Vagina (tissue), 2 donors: ENCODE measurements at regions of chr17 and their contacts with region 1.

Region 1: DNA sequence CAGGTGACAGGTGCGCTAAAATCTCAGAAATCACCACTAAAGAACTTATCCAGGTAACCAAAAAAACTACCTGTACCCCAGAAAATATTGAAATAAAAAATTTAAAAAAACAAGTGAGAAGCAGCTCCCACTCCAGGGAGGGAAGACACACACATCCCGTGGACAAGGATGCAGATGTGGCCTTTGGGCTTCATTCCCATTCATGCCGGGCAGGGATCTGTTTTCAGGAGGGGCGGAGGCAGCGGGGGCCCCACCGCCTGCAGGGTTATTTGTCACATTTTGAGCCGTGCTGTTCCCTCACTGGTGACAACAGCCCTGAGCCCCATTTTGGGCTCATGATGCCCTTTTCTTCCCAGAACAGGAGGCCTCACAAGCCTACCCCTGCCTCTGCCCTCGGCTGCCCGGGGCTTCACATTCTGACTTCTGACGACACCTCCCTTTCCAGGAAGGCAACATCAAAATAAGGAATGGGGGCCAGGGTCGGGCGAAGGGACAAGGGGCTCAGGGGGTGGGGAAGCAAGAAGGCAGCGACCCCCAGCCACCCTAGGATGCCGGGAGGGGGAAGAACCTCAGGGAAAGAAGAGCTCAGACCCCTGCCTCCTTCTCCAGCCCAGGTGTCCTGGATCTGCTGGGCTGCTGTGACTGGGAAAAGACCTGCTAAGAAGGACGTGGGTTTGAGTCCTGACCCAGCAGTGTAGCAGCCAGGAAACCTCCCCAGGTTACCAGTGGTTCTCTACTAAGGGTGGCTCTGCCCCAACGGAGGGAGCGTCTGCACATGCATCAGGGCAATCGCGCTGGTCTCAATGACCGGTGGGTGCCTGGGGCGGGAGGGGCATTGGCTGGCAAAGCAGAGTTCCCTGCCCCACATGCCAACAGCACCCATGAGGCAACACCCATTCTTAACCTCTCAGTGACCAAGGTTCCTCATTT is 2.3 kb upstream of the CD79B start:
- DNase-seq: no peak
- H3K4me3 ChIP-seq: no peak overlapping the region
- H3K27ac ChIP-seq: no peak overlapping the region
- H3K4me1 ChIP-seq: peaks cover 22% of the 10 kb centered on the region
- H3K27me3 ChIP-seq: no peaks in the 10 kb centered on the region
- CTCF ChIP-seq: no peak
- POLR2A ChIP-seq: no peak

Region 2: GRCh38 chr17:62898220-62898864 is 1036.1 kb before region 1 on chr17:
- intact Hi-C with region 1: loop called (anchors 5 kb)
- DNase-seq: no peak
- H3K4me3 ChIP-seq: no peak overlapping the region
- H3K27ac ChIP-seq: no peak overlapping the region
- H3K4me1 ChIP-seq: peaks cover 5% of the 10 kb centered on the region
- H3K27me3 ChIP-seq: no peaks in the 10 kb centered on the region
- CTCF ChIP-seq: no peak
- POLR2A ChIP-seq: no peak

Region 3: DNA sequence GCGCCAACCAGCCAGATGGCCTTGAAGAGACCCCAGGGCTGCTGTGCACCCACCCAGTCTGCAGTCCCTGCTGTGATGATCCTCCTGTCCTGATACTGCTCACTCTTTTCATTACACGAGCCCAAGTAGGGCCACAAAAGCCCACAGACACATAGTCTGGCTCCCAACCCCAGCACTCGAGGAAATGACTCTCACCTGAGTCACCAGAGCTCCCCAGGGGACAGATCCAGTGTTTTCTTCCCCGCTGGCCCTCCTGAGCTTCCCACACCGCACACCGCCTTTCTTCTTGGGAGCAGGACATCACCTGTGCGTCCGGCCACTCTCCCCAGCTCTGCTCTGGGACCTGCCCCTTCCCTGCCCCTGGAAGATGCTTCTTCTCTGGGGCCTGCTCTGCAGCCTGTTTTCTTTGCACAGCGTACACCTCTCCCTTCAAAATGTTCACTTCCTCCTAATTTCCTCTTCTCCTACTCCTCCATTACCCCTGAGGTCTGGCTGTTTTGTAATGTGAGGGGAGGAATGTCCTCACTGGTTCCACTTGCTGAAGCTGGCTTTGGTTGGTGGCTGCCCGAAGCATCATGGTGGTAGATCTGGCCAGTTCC is 40.2 kb after region 1 on chr17:
- intact Hi-C with region 1: no loop called
- DNase-seq: no peak
- H3K4me3 ChIP-seq: no peak overlapping the region
- H3K27ac ChIP-seq: no peak overlapping the region
- H3K4me1 ChIP-seq: no peaks in the 10 kb centered on the region
- H3K27me3 ChIP-seq: no peaks in the 10 kb centered on the region
- CTCF ChIP-seq: no peak
- POLR2A ChIP-seq: no peak